ENCODE measurements at regions of chr3 and their contacts with region 1.

Region 1: DNA sequence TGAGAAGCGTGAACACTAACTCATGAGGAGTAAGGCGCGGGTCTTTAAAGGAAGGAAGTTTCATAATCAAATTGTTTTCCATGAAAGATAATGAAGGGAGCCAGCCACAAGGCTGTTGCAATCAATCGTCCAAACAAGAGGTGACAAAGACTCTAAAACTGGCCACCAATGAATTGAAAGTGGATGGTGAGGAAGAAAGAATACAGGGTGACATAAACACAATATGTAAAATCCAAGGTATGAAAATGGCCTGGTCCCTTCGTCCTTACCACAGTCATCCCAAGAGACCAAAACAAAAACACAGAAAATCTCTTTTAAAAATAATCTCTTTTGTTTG is 12.0 kb downstream of the CD86 start:
- DNase-seq: peak; percentile 39
- H3K4me3 ChIP-seq: peak overlapping the region; percentile 57
- H3K27ac ChIP-seq: peak overlapping the region; percentile 72
- H3K4me1 ChIP-seq: peaks cover 88% of the 10 kb centered on the region
- CTCF ChIP-seq: no peak

Region 2: DNA sequence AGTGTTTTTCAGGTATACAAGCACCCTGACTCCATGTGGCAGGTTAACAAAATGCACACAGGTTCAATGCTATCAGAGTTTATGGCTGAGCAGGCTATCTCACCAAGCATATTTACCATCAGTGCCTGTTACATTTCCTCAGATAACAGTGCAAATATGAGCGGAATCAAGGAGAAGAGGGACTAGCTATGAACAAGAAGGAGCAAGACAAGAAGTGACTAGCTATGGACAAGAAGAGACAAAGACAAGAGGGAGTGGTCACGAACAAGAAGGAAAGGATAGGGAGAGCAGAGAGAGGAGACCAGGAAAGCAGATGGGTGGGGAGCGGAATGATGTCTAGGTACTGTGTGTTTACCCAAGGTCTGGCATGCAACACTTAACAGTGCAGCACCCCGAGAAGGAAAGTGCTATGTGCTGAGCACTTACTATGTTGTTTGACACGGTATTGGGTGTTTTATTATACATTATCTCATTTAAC is 53.7 kb before region 1 on chr3:
- CTCF ChIA-PET with region 1: no interaction called
- POLR2A ChIA-PET with region 1: interaction called, 11 read pairs
- intact Hi-C with region 1: no loop called
- DNase-seq: no peak
- H3K4me3 ChIP-seq: no peak overlapping the region
- H3K27ac ChIP-seq: no peak overlapping the region
- H3K4me1 ChIP-seq: peaks cover 57% of the 10 kb centered on the region
- CTCF ChIP-seq: 0 out of 2 replicates have a peak, but pooled peaks have one; percentile 31

Region 3: GRCh38 chr3:122055215-122055614 is 12.0 kb before region 1 on chr3 and contains the start of gene CD86:
- CTCF ChIA-PET with region 1: interaction called, 4 read pairs
- POLR2A ChIA-PET with region 1: interaction called, 48 read pairs
- intact Hi-C with region 1: loop called (anchors 2 kb)
- DNase-seq: peak; percentile 86
- H3K4me3 ChIP-seq: peak within 1 kb of the TSS; percentile 72
- H3K27ac ChIP-seq: peak within 1 kb of the TSS; percentile 61
- H3K4me1 ChIP-seq: peaks cover 49% of the 10 kb centered on the region
- CTCF ChIP-seq: no peak
- total RNA-seq, gene CD86: 10.8 and 13.5 TPM in 2 replicates

Measured in OCI-LY7 (cell line).